Psoas muscle (tissue), 8 donors: ENCODE measurements at regions of chr5 and their contacts with region 1.

Region 1: DNA sequence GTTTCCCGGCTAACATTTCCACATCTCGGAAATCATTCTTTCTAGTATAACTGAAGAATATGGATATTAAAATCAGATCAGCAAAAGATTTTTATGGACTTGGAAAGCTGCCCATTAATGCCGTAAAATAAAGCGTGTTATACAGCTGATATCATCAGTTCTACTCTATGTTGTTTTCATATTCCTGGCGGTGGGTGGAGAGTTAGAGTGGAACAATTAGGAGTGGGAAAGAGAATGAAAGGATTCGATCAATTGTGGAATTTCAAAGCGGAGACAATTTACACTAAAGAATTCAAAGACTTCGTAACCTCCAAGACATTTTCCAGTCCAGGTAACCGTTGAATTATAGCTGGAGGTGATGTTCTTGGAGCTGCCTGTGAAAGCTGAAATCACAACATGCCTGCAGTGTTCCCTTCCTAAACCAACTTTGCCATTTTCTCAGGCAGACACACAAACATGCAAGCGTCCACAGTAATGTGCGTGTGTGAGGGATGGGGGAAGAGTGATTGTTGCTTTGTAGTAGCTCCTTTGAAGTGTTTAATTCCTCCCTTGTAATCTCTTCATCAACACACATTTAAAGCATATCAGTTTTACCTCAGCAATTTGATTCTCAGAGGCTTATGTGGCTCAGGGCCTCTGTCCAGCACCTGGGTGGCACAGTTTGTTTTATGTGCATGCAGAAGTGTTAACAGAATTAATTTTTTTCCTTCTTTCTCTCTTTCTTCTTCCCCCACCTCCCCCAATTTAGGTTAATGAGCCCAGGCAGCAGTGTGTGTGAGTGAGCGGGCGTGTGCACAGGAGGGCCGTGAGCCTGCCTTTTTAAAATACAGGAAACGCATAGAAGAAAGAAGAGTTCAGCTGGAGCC is 544.1 kb downstream of the RAB3C start:
- DNase-seq: no peak
- ATAC-seq: peak; percentile 10 to 40 (median 28)
- H3K4me3 ChIP-seq: peak overlapping the region; percentile 56
- H3K27ac ChIP-seq: peak overlapping the region; percentile 84
- H3K4me1 ChIP-seq: peaks cover 68% of the 10 kb centered on the region
- H3K27me3 ChIP-seq: no peaks in the 10 kb centered on the region
- CTCF ChIP-seq: no peak

Region 2: GRCh38 chr5:59086024-59086423 is 40.9 kb before region 1 on chr5:
- intact Hi-C with region 1: loop called in 1 of 2 experiments (anchors 5 kb)
- DNase-seq: no peak
- ATAC-seq: peak in 3 of 4 donors; percentile 21 to 34 (median 30)
- H3K4me3 ChIP-seq: no peak overlapping the region
- H3K27ac ChIP-seq: no peak overlapping the region
- H3K4me1 ChIP-seq: peaks cover 24% of the 10 kb centered on the region
- H3K27me3 ChIP-seq: no peaks in the 10 kb centered on the region
- CTCF ChIP-seq: no peak

Region 3: DNA sequence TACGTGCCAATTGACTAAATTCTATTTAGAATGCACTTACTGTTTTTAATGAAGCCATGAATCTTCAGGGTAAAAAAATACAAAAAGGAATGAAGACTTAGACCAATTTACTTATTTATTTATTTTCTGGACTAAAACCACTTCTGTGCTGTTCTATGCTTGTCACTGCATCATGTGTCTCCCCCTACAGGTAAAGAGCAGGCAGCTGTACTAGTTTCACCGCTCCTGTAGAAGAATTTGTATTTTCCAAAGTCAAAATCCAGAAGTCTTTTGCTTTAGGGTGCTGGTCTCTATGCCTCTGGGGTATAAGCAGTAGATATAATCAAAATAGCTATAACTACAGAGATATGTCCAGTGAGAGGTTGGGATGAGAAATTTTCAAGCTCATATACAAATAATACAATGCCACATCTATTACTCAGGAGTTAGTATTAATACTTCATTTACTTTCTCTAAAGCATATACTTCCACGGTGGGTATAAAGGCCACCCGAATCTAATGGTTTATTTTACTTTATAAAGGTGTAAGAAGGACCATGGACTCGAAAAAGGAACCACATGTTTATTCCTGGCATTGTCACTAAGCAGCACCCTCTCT is 47.4 kb after region 1 on chr5:
- intact Hi-C with region 1: loop called in 1 of 2 experiments (anchors 10 kb)
- DNase-seq: no peak
- ATAC-seq: peak; percentile 34 to 64 (median 52)
- H3K4me3 ChIP-seq: no peak overlapping the region
- H3K27ac ChIP-seq: peak overlapping the region; percentile 12
- H3K4me1 ChIP-seq: peaks cover 31% of the 10 kb centered on the region
- H3K27me3 ChIP-seq: no peaks in the 10 kb centered on the region
- CTCF ChIP-seq: peak; percentile 79